Activated CD4-positive, alpha-beta T cell treated with anti-CD3 and anti-CD28 coated beads, Interleukin-2, amount 10 ng/mL, durations not matched to agents 24 days and 14 days (primary cell): ENCODE measurements at regions of chr2 and their contacts with region 1.

Region 1: DNA sequence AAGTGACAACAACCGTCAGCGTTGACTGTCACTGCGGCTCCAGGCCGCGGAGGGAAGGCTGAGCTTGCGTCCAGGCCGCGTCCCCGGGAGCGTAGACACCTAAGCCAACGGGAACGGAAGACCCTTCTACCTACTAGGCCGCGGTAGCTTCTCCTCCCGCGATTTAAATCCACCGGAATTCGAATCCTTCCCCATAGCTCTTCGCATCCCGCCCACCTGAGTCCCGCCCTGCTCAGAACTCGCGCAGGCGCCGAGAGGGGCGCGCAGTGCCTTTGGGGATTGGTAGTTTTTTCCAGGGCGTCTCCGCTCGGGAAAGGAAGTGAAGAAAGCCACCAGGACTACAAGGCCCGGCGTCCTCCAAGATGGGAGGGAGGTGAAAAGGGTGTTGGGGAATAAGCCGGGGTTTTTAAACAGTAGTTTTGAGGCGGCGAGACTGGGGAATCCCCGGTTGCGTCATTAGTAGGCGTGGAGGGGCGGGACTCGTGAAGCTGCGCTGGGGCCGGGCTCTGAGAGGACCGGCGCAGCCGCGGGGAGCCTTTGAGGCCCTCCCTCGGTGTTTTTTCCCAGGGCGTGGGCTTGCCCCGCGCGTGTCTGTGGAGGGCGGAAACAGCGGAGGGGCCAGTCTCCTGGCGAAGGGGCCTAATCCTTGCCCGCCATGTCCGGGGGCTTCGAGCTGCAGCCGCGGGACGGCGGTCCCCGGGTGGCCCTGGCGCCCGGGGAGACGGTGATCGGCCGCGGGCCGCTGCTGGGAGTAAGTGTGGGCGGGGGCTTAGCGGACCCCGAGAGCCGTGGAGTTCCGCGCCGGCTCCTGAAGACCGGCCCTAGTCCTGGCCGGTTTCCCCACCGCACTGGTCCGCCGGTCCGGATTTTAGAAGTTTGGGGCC is at the starts of genes APLF and FBXO48:
- DNase-seq: peak; percentile 100
- H3K4me3 Mint-ChIP-seq: peak within 1 kb of the TSS; percentile 96
- H3K27ac Mint-ChIP-seq: peak within 1 kb of the TSS; percentile 93
- H3K4me1 Mint-ChIP-seq: peaks cover 44% of the 10 kb centered on the region
- H3K27me3 Mint-ChIP-seq: no peaks in the 10 kb centered on the region
- total RNA-seq, gene APLF: 2.0 and 2.1 TPM in 2 replicates
- total RNA-seq, gene FBXO48: 1.2 TPM in 2 replicates

Region 2: GRCh38 chr2:68251187-68251854 is 216.0 kb before region 1 on chr2:
- intact Hi-C with region 1: loop called (anchors 1 kb)
- DNase-seq: peak; percentile 92
- H3K4me3 Mint-ChIP-seq: peak overlapping the region; percentile 92
- H3K27ac Mint-ChIP-seq: peak overlapping the region; percentile 99
- H3K4me1 Mint-ChIP-seq: peaks cover 37% of the 10 kb centered on the region
- H3K27me3 Mint-ChIP-seq: peaks cover 4% of the 10 kb centered on the region

Region 3: GRCh38 chr2:68487773-68488355 is 20.5 kb after region 1 on chr2:
- intact Hi-C with region 1: loop called (anchors 1 kb)
- DNase-seq: no peak
- H3K4me3 Mint-ChIP-seq: no peak overlapping the region
- H3K27ac Mint-ChIP-seq: no peak overlapping the region
- H3K4me1 Mint-ChIP-seq: peaks cover 2% of the 10 kb centered on the region
- H3K27me3 Mint-ChIP-seq: peaks cover 3% of the 10 kb centered on the region

Region 4: GRCh38 chr2:68709421-68709911 is 242.1 kb after region 1 on chr2:
- intact Hi-C with region 1: loop called (anchors 2 kb)
- DNase-seq: peak; percentile 74
- H3K4me3 Mint-ChIP-seq: peak overlapping the region; percentile 11
- H3K27ac Mint-ChIP-seq: peak overlapping the region; percentile 64
- H3K4me1 Mint-ChIP-seq: peaks cover 29% of the 10 kb centered on the region
- H3K27me3 Mint-ChIP-seq: peaks cover 4% of the 10 kb centered on the region

Region 5: DNA sequence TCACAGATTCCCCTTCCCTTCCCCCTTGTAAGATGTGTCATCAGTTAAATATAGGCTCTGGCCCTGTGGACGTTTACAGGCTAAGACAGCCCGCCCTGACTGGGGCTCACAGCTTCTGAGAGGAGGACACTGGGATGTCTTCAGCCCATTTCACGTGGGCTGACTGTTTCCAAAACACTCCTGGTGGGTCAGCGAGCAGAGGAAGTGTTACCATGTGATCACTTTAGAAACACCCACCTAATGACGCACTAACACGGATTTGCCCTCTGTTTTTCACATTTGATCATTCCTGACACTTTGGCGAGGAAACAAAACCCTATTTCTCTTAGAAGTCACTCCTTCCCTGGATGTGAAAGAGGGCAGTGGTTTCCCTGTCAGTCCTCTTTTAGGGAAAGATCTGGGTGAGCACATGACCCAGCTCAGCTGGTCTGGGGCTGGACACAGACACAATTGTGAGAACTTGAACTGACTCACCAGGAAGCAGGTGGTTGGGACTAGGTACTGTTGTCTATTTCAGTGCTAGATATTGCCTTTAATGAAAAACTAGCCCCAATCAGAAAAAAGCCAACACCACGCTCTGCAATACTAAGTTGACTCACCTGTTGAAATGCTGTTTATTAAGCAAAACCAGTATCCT is 365.0 kb after region 1 on chr2:
- intact Hi-C with region 1: loop called (anchors 2 kb)
- DNase-seq: peak; percentile 74
- H3K4me3 Mint-ChIP-seq: peak overlapping the region; percentile 57
- H3K27ac Mint-ChIP-seq: peak overlapping the region; percentile 85
- H3K4me1 Mint-ChIP-seq: peaks cover 73% of the 10 kb centered on the region
- H3K27me3 Mint-ChIP-seq: no peaks in the 10 kb centered on the region

Region 6: GRCh38 chr2:69306822-69307578 is 839.7 kb after region 1 on chr2:
- intact Hi-C with region 1: loop called (anchors 10 kb)
- DNase-seq: peak; percentile 89
- H3K4me3 Mint-ChIP-seq: peak overlapping the region; percentile 78
- H3K27ac Mint-ChIP-seq: no peak overlapping the region
- H3K4me1 Mint-ChIP-seq: peaks cover 12% of the 10 kb centered on the region
- H3K27me3 Mint-ChIP-seq: peaks cover 39% of the 10 kb centered on the region